Activated naive CD4-positive, alpha-beta T cell treated with anti-CD3 and anti-CD28 coated beads for 36 hours (primary cell): ENCODE measurements at regions of chr1 and their contacts with region 1.

Region 1: GRCh38 chr1:226121587-226122400 is 59.3 kb downstream of the H3-3A start:
- DNase-seq: peak; percentile 68
- H3K4me3 Mint-ChIP-seq: peak overlapping the region; percentile 76
- H3K27ac Mint-ChIP-seq: peak overlapping the region; percentile 50
- H3K4me1 Mint-ChIP-seq: peaks cover 22% of the 10 kb centered on the region
- H3K27me3 Mint-ChIP-seq: no peaks in the 10 kb centered on the region

Region 2: DNA sequence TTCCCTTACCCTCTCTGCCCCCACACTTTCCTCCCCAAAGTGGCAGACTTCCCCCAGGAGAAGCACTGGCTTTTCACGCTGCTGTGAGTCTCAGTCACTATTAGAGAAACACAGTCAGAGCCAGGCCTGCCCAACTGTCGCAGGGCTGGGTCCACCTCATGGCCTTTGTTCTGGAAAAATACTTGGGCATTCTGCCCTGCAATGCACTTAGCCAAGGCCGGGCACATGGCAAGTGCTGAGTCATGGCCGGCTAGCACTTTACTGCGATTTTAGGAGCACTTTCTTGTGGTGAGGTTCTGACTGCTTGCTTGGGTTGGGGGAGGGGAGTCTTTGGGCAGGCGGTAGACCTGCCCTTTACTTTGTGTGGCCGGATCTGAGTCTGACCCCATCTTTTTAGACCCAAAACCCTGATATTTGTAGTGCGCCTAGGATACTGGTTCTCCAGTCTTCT is 304.2 kb before region 1 on chr1:
- CTCF ChIA-PET with region 1: no interaction called
- intact Hi-C with region 1: no loop called
- DNase-seq: peak; percentile 18
- H3K4me3 Mint-ChIP-seq: no peak overlapping the region
- H3K27ac Mint-ChIP-seq: no peak overlapping the region
- H3K4me1 Mint-ChIP-seq: peaks cover 5% of the 10 kb centered on the region
- H3K27me3 Mint-ChIP-seq: no peaks in the 10 kb centered on the region

Region 3: DNA sequence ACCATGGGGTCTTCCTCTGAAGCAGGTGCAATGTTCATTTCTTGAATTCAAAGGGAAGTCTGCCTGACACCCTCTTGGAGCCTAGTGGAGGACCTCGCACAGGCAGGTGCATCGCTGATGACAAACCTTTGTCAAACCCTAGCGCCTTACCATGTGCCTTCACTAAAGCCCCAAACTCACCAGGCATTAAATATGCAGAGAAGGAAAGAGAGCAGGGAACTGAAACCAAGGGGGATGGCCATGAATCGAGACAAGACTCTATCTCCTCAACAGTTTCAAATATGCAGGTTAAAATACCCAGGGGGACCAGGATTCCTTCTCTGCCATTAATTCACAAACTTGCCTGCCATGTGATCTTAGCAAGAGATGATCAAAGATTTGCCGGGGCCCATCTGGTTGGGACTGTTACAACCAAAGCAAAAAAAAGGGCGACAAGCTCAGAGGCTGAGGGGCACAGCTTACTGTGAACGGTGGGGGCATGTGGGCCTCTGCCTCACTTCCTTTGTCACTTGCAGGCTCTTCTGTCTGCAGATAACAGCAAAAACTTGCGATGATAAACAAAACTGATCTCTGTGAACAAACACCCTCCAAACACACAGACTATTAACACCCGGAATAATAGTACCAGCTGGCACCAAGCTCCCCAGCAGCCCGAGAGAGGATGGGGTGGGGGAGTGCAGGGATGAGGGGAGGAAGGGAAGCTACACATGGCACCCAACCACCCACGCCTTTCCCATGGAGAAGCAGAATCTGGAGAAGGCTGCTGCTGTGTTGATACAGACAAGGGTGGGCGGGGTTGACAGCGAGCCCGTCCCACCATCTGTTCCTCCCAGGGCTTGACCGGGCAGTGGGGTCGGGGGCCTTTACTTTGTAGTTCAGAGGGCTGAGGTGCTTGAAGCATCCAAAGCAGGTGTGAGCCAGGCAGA is 273.5 kb before region 1 on chr1:
- CTCF ChIA-PET with region 1: no interaction called
- intact Hi-C with region 1: no loop called
- DNase-seq: peak; percentile 30
- H3K4me3 Mint-ChIP-seq: no peak overlapping the region
- H3K27ac Mint-ChIP-seq: peak overlapping the region; percentile 79
- H3K4me1 Mint-ChIP-seq: peaks cover 43% of the 10 kb centered on the region
- H3K27me3 Mint-ChIP-seq: no peaks in the 10 kb centered on the region

Region 4: GRCh38 chr1:225962440-225962975 is 159.3 kb before region 1 on chr1:
- CTCF ChIA-PET with region 1: interaction called, 4 read pairs
- intact Hi-C with region 1: loop called (anchors 1 kb)
- DNase-seq: peak; percentile 76
- H3K4me3 Mint-ChIP-seq: no peak overlapping the region
- H3K27ac Mint-ChIP-seq: no peak overlapping the region
- H3K4me1 Mint-ChIP-seq: no peaks in the 10 kb centered on the region
- H3K27me3 Mint-ChIP-seq: no peaks in the 10 kb centered on the region

Region 5: GRCh38 chr1:226135709-226136108 is 13.9 kb after region 1 on chr1:
- CTCF ChIA-PET with region 1: interaction called, 11 read pairs
- intact Hi-C with region 1: no loop called
- DNase-seq: no peak
- H3K4me3 Mint-ChIP-seq: no peak overlapping the region
- H3K27ac Mint-ChIP-seq: no peak overlapping the region
- H3K4me1 Mint-ChIP-seq: no peaks in the 10 kb centered on the region
- H3K27me3 Mint-ChIP-seq: no peaks in the 10 kb centered on the region

Region 6: GRCh38 chr1:226268421-226269116 is 146.8 kb after region 1 on chr1:
- CTCF ChIA-PET with region 1: interaction called, 10 read pairs
- intact Hi-C with region 1: no loop called
- DNase-seq: no peak
- H3K4me3 Mint-ChIP-seq: no peak overlapping the region
- H3K27ac Mint-ChIP-seq: no peak overlapping the region
- H3K4me1 Mint-ChIP-seq: no peaks in the 10 kb centered on the region
- H3K27me3 Mint-ChIP-seq: no peaks in the 10 kb centered on the region

Region 7: DNA sequence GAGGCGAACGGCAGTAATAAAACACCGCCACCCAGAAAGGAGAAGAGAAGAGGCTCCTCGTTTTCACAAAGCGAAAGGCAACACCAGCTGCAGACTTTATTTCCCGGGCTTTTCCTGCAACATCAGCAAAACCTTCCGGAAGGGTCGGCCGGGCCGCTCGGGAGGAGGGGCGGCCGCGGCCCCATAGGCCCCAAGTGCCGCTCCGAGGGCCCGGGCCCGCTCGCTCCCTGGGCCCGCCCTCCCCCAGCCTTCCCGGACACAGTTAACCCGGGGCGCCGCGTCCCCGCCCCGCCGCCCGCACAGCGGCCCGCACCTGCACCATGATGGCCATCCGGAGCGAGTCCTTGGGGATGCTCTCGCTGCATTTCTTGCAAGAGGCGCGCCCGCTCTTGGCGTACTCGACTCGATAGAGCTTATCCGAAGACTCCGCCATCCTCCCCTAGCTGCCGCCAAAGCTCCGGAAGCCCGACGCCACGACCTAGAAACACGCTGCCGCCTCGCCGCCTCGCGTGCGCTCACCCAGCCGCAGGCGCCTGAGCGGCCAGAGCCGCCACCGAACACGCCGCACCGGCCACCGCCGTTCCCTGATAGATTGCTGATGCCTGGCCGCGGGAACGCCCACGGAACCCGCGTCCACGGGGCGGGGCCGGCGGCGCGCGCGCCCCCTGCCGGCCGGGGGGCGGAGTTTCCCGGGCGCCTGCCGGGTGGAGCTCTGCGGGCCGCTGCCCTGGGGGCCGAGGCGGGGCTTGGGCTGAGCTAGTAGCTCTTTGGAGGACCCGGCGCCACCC is 285.9 kb after region 1 on chr1 and contains the start of gene PARP1:
- CTCF ChIA-PET with region 1: interaction called, 3 read pairs
- intact Hi-C with region 1: loop called (anchors 1 kb)
- DNase-seq: peak; percentile 87
- H3K4me3 Mint-ChIP-seq: peak within 1 kb of the TSS; percentile 99
- H3K27ac Mint-ChIP-seq: peak within 1 kb of the TSS; percentile 98
- H3K4me1 Mint-ChIP-seq: peaks cover 39% of the 10 kb centered on the region
- H3K27me3 Mint-ChIP-seq: no peaks in the 10 kb centered on the region
- total RNA-seq, gene PARP1: 265 to 273 TPM